BJ (cell line): ENCODE measurements at regions of chr1 and their contacts with region 1.

Region 1: DNA sequence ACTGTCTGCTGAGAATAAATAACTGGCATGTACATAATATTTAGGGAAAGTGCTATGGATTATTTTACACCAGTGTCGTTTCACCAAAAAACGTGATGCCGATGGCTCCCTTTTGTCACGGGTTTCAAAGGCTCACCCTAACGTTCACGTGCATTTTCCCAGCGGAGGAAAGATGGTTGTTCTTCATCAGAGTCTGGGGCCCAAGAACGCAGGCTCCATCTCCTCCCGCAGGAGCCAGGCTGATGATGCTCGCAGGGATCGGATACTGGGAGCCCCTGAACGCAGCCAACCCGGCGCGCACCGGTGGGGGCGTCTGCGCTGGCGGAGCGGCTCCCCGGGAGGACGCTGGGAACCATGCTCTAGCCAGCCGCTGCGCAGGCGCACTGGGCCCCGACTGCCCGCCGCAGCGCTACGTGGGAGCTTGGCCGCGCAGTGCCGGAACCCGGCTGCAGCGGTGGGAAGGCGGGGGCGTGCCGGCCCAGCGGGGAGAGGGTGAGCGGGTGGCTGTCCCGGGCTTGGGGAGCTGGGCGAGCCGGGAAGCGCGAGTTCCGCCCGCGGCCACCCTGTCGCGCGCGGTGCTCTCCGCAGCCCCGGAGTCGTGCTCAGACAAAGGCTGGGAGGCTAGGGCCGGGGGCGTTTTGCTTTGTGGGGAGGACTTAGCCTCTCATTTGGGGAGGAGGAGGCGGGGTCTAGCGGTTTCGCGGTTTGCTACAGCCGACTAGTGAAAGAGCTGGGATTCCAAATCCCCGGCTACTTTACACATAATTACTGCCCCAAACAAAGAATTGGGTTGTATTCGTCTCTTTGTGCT is at the start of gene ZFP69B:
- DNase-seq: peak; percentile 43
- H3K4me3 ChIP-seq: peak within 1 kb of the TSS; percentile 81
- H3K27me3 ChIP-seq: no peaks in the 10 kb centered on the region
- CTCF ChIP-seq: no peak; the same call in 1 of the 2 replicates
- polyA plus RNA-seq, gene ZFP69B: 1.5 and 2.5 TPM in 2 replicates

Region 2: DNA sequence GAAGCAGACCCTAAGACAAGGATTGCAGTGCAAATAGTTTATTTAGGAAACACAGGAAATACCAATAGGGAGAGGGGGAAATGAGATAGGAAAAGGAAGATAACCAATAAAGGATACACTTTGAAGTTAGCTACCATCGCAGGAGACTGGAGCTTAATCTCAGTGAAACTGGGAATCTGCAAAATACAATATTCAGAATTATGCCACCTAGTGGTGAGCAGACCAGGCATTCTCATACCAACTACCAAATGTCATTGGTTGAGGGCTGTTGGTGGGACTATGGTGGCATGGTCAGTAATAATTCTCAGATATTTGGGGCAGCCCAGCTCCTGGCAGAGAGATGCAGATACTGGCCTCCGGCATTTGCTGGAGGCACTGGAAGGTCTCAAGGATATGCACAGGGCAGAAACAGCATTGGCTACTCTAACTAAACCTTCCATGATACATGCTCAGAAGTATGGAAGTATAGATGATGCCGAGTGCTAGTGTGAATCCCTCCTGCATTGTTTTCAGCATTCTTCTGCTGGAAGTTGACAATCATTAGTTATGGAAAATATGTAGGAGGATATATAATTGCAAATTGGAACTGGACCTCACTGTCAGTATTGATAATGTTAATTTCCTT is 11.4 kb before region 1 on chr1:
- CTCF ChIA-PET with region 1: interaction called, 28 read pairs
- POLR2A ChIA-PET with region 1: no interaction called
- DNase-seq: no peak
- H3K4me3 ChIP-seq: no peak overlapping the region
- H3K27me3 ChIP-seq: no peaks in the 10 kb centered on the region
- CTCF ChIP-seq: peak; percentile 67